ENCODE measurements at regions of chr10 and their contacts with region 1.

Region 1: DNA sequence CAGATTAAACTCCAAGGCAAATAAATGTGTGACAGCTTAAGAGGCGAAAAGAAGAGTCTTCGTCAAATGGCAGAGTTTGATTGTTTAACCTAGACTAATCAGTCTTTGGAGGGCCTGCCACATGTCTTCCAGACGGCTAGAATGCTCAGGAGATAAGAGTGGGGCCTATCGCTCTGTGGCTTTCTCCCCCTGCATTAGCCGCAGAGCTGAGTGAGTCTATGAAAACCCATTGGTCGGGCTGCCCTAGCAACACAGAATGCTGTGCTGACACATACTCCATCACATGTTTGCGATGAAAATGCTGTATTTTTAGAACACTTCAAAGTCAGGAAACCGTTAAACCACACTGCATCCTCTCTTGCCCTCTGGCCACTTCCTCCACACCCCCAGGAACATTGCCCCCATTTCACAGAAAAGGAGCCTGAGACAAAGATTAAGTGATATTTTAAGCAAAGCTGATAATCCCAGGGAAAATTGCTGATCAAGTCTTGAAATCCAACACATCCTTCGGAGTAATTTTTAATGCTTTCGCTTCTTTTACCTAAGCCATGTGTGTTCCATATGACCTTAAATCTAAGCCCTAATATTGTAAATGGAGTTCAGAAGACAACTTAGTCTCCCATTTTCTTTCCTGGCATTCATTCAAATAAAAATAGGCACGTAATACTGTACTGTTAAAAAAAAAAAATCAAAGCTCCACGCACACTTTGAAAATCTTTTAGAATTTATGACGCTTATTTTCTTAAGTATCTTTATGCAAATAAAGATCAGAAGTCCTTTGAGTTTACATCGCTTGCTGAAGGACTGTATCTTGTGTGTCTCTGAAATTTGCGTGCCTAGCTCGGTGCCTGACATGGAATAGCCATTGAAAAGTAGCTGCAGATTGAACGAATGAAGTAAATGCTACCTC is 161.2 kb downstream of the CELF2 start:
- DNase-seq: peak; percentile 98
- ATAC-seq: peak; percentile 85
- H3K4me3 ChIP-seq: peak overlapping the region; percentile 57
- H3K27ac ChIP-seq: peak overlapping the region; percentile 95
- H3K4me1 ChIP-seq: peaks cover 71% of the 10 kb centered on the region
- H3K27me3 ChIP-seq: no peaks in the 10 kb centered on the region
- CTCF ChIP-seq: no peak
- EP300 ChIP-seq: peak; percentile 95 to 99
- POLR2A ChIP-seq: 0 out of 2 replicates have a peak, but pooled peaks have one; percentile 46
- RAD21 ChIP-seq: 0 out of 2 replicates have a peak, but pooled peaks have one; percentile 2

Region 2: DNA sequence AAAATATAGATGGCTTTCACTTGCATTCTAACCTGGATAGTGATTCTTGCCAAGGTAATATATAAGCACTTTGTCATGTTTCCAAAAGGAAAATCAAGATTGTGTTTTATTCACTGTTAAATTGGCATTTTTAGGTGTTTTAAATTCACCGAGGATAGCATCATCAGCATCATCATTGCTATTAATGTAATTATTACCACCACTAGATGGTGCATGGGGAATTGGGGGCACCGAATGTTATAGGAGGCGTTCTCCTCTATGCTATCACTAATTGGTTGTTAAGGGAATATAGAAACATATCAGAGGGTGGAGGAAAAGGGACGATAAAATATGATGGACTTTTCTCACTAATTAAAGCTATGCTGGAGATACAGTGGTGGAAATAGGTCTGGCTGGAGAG is 65.7 kb before region 1 on chr10:
- CTCF ChIA-PET with region 1: interaction called, 10 read pairs
- POLR2A ChIA-PET with region 1: no interaction called
- RAD21 ChIA-PET with region 1: interaction called, 11 read pairs
- SMC1A ChIA-PET with region 1: interaction called, 7 read pairs
- in situ Hi-C with region 1: no loop called
- intact Hi-C with region 1: no loop called
- DNase-seq: peak; percentile 20
- ATAC-seq: peak; percentile 97
- H3K4me3 ChIP-seq: no peak overlapping the region
- H3K27ac ChIP-seq: no peak overlapping the region
- H3K4me1 ChIP-seq: no peaks in the 10 kb centered on the region
- H3K27me3 ChIP-seq: no peaks in the 10 kb centered on the region
- CTCF ChIP-seq: peak; percentile 58 to 70 (median 59); a peak in 5 of 6 replicates
- EP300 ChIP-seq: no peak
- POLR2A ChIP-seq: no peak
- RAD21 ChIP-seq: peak; percentile 81

Region 3: GRCh38 chr10:11189582-11190376 is 10.9 kb after region 1 on chr10:
- CTCF ChIA-PET with region 1: interaction called, 7 read pairs
- POLR2A ChIA-PET with region 1: interaction called, 9 read pairs
- RAD21 ChIA-PET with region 1: interaction called, 9 read pairs
- SMC1A ChIA-PET with region 1: interaction called, 17 read pairs
- in situ Hi-C with region 1: no loop called
- intact Hi-C with region 1: no loop called
- DNase-seq: no peak
- ATAC-seq: no peak
- H3K4me3 ChIP-seq: no peak overlapping the region
- H3K27ac ChIP-seq: no peak overlapping the region
- H3K4me1 ChIP-seq: peaks cover 46% of the 10 kb centered on the region
- H3K27me3 ChIP-seq: no peaks in the 10 kb centered on the region
- CTCF ChIP-seq: no peak
- EP300 ChIP-seq: no peak
- POLR2A ChIP-seq: no peak
- RAD21 ChIP-seq: no peak

Region 4: DNA sequence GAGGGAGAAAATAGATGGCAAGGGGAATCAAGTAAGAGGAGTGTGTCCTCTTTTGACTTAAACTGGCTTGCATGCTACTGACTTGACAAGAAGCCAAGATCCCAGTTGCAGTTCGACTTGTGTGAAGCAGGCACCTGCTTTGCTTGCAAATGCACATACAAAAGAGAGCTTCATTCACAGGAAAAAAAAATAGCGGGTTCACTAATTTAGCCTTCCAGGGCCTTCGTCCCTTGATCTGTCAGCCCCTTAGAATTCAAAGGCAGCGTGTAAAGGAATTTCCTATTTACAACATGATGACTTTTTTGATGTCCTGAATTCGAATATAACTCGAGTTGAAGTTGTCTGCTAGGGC is 30.9 kb after region 1 on chr10:
- CTCF ChIA-PET with region 1: interaction called, 6 read pairs
- POLR2A ChIA-PET with region 1: interaction called, 6 read pairs
- RAD21 ChIA-PET with region 1: interaction called, 34 read pairs
- SMC1A ChIA-PET with region 1: interaction called, 14 read pairs
- in situ Hi-C with region 1: no loop called
- intact Hi-C with region 1: loop called (anchors 1 kb)
- DNase-seq: no peak
- ATAC-seq: peak; percentile 35
- H3K4me3 ChIP-seq: peak overlapping the region; percentile 7
- H3K27ac ChIP-seq: peak overlapping the region; percentile 92
- H3K4me1 ChIP-seq: peaks cover 86% of the 10 kb centered on the region
- H3K27me3 ChIP-seq: no peaks in the 10 kb centered on the region
- CTCF ChIP-seq: no peak
- EP300 ChIP-seq: no peak; a peak in 1 of 4 replicates
- POLR2A ChIP-seq: no peak
- RAD21 ChIP-seq: no peak

Region 5: DNA sequence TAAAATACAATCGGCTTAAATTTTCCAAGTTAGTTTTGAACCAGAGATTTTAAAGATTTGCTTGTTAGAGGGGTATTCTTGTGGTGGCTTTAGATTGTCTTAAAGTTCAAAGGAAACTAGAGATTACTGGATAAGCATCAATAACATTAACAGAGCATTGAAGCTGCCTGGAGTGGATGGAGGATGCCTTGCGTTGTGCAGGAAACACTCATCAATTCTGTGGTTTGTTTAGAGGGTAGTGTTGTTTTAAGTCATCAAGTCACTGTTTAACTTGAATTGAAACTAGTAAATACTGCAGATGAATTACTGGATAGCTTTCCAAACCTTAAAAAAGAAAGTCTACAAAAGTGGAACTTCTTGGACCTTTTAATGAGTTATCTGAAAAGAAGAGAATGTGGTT is 57.4 kb after region 1 on chr10:
- CTCF ChIA-PET with region 1: interaction called, 89 read pairs
- POLR2A ChIA-PET with region 1: interaction called, 130 read pairs
- RAD21 ChIA-PET with region 1: interaction called, 212 read pairs
- SMC1A ChIA-PET with region 1: interaction called, 417 read pairs
- in situ Hi-C with region 1: no loop called
- intact Hi-C with region 1: no loop called
- DNase-seq: no peak
- ATAC-seq: peak; percentile 69
- H3K4me3 ChIP-seq: peak overlapping the region; percentile 36; the same call in 1 of the 2 replicates
- H3K27ac ChIP-seq: peak overlapping the region; percentile 74
- H3K4me1 ChIP-seq: peaks cover 71% of the 10 kb centered on the region
- H3K27me3 ChIP-seq: no peaks in the 10 kb centered on the region
- CTCF ChIP-seq: 0 out of 6 replicates have a peak, but pooled peaks of 1 of the 3 experiments have one; percentile 2
- EP300 ChIP-seq: peak in 1 of 2 experiments; percentile 63; a peak in 1 of 4 replicates
- POLR2A ChIP-seq: no peak
- RAD21 ChIP-seq: no peak

Region 6: GRCh38 chr10:11255796-11256444 is 77.1 kb after region 1 on chr10:
- CTCF ChIA-PET with region 1: interaction called, 4 read pairs
- POLR2A ChIA-PET with region 1: interaction called, 6 read pairs
- RAD21 ChIA-PET with region 1: no interaction called
- SMC1A ChIA-PET with region 1: interaction called, 12 read pairs
- in situ Hi-C with region 1: no loop called
- intact Hi-C with region 1: no loop called
- DNase-seq: no peak
- ATAC-seq: peak; percentile 68
- H3K4me3 ChIP-seq: no peak overlapping the region
- H3K27ac ChIP-seq: peak overlapping the region; percentile 54
- H3K4me1 ChIP-seq: peaks cover 47% of the 10 kb centered on the region
- H3K27me3 ChIP-seq: no peaks in the 10 kb centered on the region
- CTCF ChIP-seq: no peak
- EP300 ChIP-seq: peak in 1 of 2 experiments; percentile 22; a peak in 1 of 4 replicates
- POLR2A ChIP-seq: no peak; the same call in 1 of the 2 replicates
- RAD21 ChIP-seq: no peak

Region 7: DNA sequence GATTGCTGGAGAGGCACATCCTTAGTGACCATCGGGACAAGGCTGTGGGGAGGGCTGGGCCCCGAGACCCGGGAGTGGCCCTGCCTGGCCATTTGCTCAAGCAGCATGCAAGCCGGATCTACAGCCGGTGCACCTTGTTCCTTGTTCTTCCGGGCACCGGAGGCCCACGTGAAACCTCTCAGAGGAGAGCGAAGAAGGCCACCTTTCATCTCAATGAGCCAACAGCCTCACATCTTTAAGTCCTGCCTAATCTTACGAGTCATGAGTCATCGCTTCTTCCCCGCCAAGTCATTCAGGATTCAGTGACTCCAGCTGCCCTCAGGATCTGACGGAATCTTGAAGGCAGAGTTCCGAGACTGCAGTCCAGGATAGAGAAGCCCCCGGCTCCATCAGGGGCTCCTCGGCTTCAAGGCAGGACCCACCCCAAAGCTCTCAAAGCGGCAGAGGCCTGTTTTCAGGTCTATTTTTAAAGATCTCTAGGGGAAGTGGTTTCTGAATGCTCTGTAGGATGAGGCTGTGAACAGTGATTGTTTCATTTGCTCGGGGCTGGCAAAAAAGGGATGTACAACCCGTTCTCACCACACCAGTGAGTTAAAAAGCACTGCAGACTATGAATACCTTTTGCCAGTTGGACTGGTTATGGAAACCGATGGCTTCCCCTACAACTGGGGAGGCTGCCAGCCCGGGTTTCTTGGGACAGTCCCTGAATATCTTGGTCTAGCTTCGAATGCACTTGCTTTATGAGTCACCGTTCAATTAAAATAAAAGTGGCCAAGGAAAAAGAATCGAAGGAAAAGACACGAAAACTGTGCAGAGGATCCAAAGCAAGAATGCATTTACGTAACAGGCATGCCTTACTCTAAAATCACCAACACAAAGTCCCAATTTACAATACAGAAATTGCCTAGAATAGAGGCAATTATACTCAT is 506.1 kb after region 1 on chr10:
- CTCF ChIA-PET with region 1: no interaction called
- POLR2A ChIA-PET with region 1: no interaction called
- RAD21 ChIA-PET with region 1: interaction called, 3 read pairs
- SMC1A ChIA-PET with region 1: no interaction called
- in situ Hi-C with region 1: loop called (anchors 10 kb)
- intact Hi-C with region 1: loop called (anchors 10 kb)
- DNase-seq: peak; percentile 94
- ATAC-seq: peak; percentile 83
- H3K4me3 ChIP-seq: peak overlapping the region; percentile 58
- H3K27ac ChIP-seq: peak overlapping the region; percentile 100
- H3K4me1 ChIP-seq: peaks cover 51% of the 10 kb centered on the region
- H3K27me3 ChIP-seq: no peaks in the 10 kb centered on the region
- CTCF ChIP-seq: no peak
- EP300 ChIP-seq: peak; percentile 66 to 68; a peak in 2 of 4 replicates
- POLR2A ChIP-seq: peak; percentile 79
- RAD21 ChIP-seq: peak; percentile 29